Calu3 (cell line): ENCODE measurements at regions of chr3 and their contacts with region 1.

Region 1: DNA sequence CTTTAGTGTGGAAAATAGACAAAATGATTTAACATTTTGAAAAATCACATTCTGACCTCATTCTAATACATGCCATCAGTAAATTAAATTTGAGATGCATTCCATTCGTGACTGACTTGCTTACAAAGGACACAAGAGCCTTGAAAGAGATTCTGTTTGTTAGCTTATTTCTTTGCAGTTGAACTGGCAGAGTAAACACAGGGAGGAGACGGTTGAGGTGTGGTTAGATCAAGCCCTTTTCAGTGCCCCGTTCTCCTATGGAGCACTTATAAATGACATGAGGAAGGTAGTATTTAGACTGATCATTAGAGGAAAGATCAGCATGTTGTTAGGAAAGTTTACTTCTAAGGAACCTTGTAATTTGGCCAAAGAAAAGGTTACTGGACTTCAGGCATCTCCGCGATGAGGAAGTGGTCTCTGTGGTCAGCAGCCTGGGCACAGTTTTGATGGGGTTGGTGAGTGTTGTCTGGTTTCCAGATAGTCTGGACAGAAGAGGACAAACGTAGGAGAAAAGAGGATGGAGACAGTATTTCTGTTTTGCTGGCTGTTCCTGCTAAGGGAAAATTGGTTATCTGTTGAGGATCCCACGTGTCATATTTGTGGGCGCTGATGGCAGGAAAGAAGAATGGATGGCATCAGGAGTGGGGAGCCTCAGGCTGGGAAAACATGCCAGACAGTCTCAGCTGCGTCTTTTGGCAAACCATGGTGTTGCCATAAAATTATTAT is 328.9 kb upstream of the TBL1XR1 start:
- DNase-seq: peak; percentile 44
- H3K4me3 Mint-ChIP-seq: no peak overlapping the region
- H3K27ac Mint-ChIP-seq: peak overlapping the region; percentile 82
- H3K4me1 Mint-ChIP-seq: peaks cover 66% of the 10 kb centered on the region
- H3K27me3 Mint-ChIP-seq: no peaks in the 10 kb centered on the region
- CTCF ChIP-seq: no peak

Region 2: DNA sequence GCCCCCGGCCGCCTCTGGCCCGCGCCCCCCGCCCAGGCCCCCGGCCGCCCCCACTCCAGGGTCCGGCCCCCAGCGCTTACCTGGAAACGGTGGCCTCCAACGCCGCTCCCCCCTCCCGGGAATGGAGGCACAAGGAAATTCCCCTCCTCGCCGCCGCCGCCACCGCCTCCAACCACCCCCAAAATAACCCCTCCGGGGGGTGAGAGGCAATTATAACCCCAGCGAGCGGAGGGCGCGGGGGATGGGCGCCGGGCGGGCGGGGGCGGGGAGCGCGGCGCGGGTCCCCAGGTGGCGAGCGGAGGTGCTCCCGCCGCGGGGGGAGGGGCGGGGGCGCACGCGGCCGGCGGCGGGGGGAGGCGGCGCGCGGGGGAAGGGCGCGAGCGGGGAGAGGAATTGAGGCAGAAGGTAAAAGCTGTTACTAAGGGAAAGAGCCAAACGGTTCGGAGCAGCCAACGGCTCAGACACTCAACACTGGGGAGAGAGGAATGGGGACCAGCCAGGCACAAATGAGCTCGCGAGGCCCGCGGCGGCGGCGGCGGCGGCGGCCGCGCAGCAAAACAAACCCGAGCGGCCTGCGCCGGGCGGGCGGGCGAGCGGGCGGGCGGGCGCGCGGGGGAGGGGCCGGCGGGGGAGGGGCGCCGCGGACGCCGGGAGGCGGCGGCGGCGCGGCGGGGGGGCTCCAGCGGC is 329.0 kb before region 1 on chr3 and contains the start of gene TBL1XR1:
- CTCF ChIA-PET with region 1: interaction called, 3 read pairs
- intact Hi-C with region 1: loop called (anchors 5 kb)
- DNase-seq: peak; percentile 94
- H3K4me3 Mint-ChIP-seq: peak within 1 kb of the TSS; percentile 70
- H3K27ac Mint-ChIP-seq: peak within 1 kb of the TSS; percentile 71
- H3K4me1 Mint-ChIP-seq: peaks cover 32% of the 10 kb centered on the region
- H3K27me3 Mint-ChIP-seq: no peaks in the 10 kb centered on the region
- CTCF ChIP-seq: no peak
- total RNA-seq, gene TBL1XR1: 199 and 206 TPM in 2 replicates

Region 3: GRCh38 chr3:177563243-177563780 is 37.2 kb after region 1 on chr3:
- CTCF ChIA-PET with region 1: no interaction called
- intact Hi-C with region 1: no loop called
- DNase-seq: no peak
- H3K4me3 Mint-ChIP-seq: no peak overlapping the region
- H3K27ac Mint-ChIP-seq: no peak overlapping the region
- H3K4me1 Mint-ChIP-seq: no peaks in the 10 kb centered on the region
- H3K27me3 Mint-ChIP-seq: no peaks in the 10 kb centered on the region
- CTCF ChIP-seq: no peak

Region 4: GRCh38 chr3:177615015-177615414 is 88.9 kb after region 1 on chr3:
- CTCF ChIA-PET with region 1: interaction called, 7 read pairs
- intact Hi-C with region 1: loop called (anchors 1 kb)
- DNase-seq: peak; percentile 85
- H3K4me3 Mint-ChIP-seq: no peak overlapping the region
- H3K27ac Mint-ChIP-seq: peak overlapping the region; percentile 28
- H3K4me1 Mint-ChIP-seq: peaks cover 69% of the 10 kb centered on the region
- H3K27me3 Mint-ChIP-seq: no peaks in the 10 kb centered on the region
- CTCF ChIP-seq: no peak

Region 5: GRCh38 chr3:177827511-177828207 is 301.5 kb after region 1 on chr3:
- CTCF ChIA-PET with region 1: interaction called, 4 read pairs
- intact Hi-C with region 1: loop called (anchors 5 kb)
- DNase-seq: peak; percentile 68
- H3K4me3 Mint-ChIP-seq: peak overlapping the region; percentile 48
- H3K27ac Mint-ChIP-seq: peak overlapping the region; percentile 85
- H3K4me1 Mint-ChIP-seq: peaks cover 77% of the 10 kb centered on the region
- H3K27me3 Mint-ChIP-seq: no peaks in the 10 kb centered on the region
- CTCF ChIP-seq: no peak

Region 6: GRCh38 chr3:178155521-178155920 is 629.4 kb after region 1 on chr3:
- CTCF ChIA-PET with region 1: interaction called, 4 read pairs
- intact Hi-C with region 1: loop called (anchors 5 kb)
- DNase-seq: peak; percentile 16
- H3K4me3 Mint-ChIP-seq: no peak overlapping the region
- H3K27ac Mint-ChIP-seq: no peak overlapping the region
- H3K4me1 Mint-ChIP-seq: no peaks in the 10 kb centered on the region
- H3K27me3 Mint-ChIP-seq: no peaks in the 10 kb centered on the region
- CTCF ChIP-seq: no peak